Left cardiac atrium (tissue), 4 donors: ENCODE measurements at regions of chr13 and their contacts with region 1.

Region 1: DNA sequence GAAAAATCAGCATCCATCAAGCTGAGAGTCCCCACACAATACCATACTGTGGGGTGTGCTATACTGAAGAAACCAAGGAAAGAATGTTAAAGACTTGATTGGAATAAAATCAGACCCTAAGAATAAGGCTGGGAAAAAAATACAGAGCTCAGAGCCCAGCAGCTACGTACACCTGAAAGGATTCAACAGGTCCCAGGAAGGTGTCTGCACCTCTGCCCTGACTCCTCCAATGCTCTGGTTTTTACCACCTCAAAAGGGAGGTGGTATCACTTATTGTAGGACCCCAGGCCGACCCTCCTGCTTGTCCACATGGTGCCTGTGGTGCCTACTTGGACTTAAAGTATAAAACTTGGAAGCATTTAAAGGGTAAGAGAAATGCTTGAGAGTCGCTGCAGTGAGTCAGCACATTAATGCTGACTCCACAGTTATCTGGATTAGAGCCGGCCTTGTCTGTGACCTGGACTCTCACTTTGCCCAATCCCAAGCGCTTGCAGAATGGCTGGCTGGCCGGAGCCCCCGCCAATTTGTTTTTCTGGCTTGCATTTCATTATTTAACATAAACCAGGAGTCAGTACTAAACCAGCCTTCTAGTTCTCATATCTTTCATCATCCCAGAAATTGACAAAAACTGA is 110.1 kb downstream of the FGF14 start:
- DNase-seq: no peak
- ATAC-seq: peak; percentile 47 to 62

Region 2: GRCh38 chr13:102394158-102395053 is 102.7 kb after region 1 on chr13:
- intact Hi-C with region 1: loop called in 1 of 2 experiments (anchors 10 kb)
- DNase-seq: peak; percentile 98
- ATAC-seq: peak; percentile 96 to 97